BJ (cell line): ENCODE measurements at regions of chr5 and their contacts with region 1.

Region 1: GRCh38 chr5:126499853-126500342 is 76.7 kb downstream of the GRAMD2B start:
- DNase-seq: no peak
- H3K4me3 ChIP-seq: no peak overlapping the region
- H3K27me3 ChIP-seq: no peaks in the 10 kb centered on the region
- CTCF ChIP-seq: peak; percentile 58

Region 2: DNA sequence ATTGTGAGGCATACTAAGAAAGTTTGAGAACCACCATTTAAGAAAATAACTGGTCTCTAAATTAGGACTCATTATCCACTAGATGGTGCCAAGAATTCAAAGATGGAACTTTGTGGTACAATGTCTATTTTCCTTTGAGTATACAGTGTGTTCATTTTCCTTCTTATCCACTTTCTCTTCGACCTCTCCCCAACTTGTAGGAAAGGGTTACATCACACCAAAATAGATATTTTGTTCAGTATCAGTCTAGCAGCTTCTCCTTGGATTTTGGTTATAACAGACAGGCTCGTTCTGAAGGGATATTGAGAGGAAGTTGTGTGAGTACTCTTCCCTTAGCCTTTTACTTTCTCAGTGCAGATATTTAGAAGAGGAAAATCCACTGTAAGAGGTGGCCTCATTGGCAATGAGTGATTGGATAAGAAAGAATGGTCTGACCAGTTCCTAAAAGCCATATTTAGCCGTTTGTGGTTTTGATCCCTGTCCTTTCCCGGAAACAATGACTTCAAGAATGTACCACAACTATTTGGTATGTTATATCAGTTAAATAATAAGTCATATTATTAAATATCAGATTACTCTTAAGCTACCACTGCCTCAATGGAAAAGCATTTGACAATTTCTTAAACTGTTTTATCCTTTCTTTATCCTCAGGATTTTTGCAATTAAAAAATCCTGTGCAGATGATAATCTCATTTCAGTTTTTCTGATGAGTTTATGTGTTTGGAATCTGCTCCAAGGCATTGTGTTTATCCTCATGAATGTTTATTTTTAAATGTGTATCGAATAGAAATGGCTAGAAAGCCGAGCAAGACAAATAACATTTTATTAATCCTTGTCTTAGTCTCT is 145.7 kb before region 1 on chr5:
- CTCF ChIA-PET with region 1: interaction called, 10 read pairs
- POLR2A ChIA-PET with region 1: no interaction called
- DNase-seq: peak; percentile 96
- H3K4me3 ChIP-seq: peak overlapping the region; percentile 17; the same call in 1 of the 2 replicates
- H3K27me3 ChIP-seq: no peaks in the 10 kb centered on the region
- CTCF ChIP-seq: peak; percentile 40

Region 3: GRCh38 chr5:126519634-126520592 is 20.0 kb after region 1 on chr5:
- CTCF ChIA-PET with region 1: interaction called, 14 read pairs
- POLR2A ChIA-PET with region 1: no interaction called
- DNase-seq: no peak
- H3K4me3 ChIP-seq: no peak overlapping the region
- H3K27me3 ChIP-seq: no peaks in the 10 kb centered on the region
- CTCF ChIP-seq: no peak